ENCODE measurements at regions of chr1 and their contacts with region 1.

Region 1: DNA sequence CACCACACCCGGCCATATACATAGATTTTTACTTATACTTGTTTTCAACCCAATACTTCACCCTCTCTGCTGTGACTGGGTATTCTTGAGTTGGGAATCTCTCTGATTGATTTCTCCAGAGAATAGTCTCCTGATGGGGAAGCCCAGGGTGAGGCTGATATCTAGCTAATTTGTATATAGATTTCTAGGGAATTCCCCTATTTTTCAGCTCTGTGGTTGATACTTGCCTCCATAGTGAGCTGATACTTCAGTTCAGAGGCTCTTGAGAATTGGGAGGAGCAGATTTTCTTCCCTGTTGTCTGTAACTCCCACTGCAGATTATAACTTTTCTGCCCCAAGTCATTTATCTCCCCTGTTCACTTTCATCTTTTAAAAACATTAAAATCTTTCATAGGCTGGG is 14.5 kb upstream of the SH3BGRL3 start:
- DNase-seq: no peak
- ATAC-seq: no peak
- H3K4me3 ChIP-seq: no peak overlapping the region
- H3K27ac ChIP-seq: no peak overlapping the region
- H3K4me1 ChIP-seq: no peaks in the 10 kb centered on the region
- CTCF ChIP-seq: no peak
- EP300 ChIP-seq: no peak
- POLR2A ChIP-seq: no peak
- RAD21 ChIP-seq: no peak

Region 2: DNA sequence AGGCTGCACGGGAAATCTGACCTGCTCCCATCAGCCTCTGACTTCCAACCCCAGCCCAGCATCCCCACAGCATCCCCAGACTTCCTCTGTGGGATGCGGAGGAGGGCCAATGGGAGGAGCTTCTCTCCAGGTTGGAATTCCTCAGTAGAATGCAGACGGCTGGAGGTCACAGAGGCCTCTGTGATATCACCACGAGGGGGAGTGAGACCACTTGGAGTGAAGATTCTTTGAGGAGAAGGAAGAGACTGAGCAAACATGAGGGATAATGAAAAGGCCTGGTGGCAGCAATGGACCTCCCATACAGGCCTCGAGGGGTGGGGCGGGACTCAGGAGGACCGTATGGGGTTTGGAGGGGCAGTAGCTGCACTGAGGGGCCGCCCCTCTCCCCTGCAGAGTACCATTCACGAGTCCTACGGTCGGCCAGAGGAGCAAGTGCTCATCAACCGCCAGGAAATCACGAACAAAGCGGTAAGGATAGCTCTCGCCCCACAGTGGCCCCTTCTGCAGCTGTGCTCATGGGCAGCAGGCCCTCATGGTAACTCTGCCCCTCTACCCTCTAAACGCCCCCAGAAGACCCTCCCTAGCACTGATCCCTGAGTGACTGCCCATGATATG is 74.9 kb before region 1 on chr1 and contains the start of gene CATSPER4:
- CTCF ChIA-PET with region 1: no interaction called
- POLR2A ChIA-PET with region 1: no interaction called
- DNase-seq: peak; percentile 44 to 57
- ATAC-seq: peak; percentile 62 to 81; a peak in 5 of 6 replicates
- H3K4me3 ChIP-seq: no peak within 1 kb of the TSS
- H3K27ac ChIP-seq: no peak within 1 kb of the TSS
- H3K4me1 ChIP-seq: no peaks in the 10 kb centered on the region
- CTCF ChIP-seq: no peak
- EP300 ChIP-seq: no peak
- POLR2A ChIP-seq: no peak
- RAD21 ChIP-seq: peak in 1 of 2 experiments; percentile 31; a peak in 1 of 5 replicates
- polyA plus RNA-seq, gene CATSPER4: not detected in 2 replicates

Region 3: GRCh38 chr1:26279456-26280332 is 14.3 kb after region 1 on chr1 and contains the start of gene SH3BGRL3:
- CTCF ChIA-PET with region 1: interaction called, 10 read pairs
- POLR2A ChIA-PET with region 1: no interaction called
- DNase-seq: peak; percentile 73 to 75
- ATAC-seq: peak; percentile 82 to 90
- H3K4me3 ChIP-seq: peak within 1 kb of the TSS; percentile 98
- H3K27ac ChIP-seq: peak within 1 kb of the TSS; percentile 99
- H3K4me1 ChIP-seq: peaks cover 50% of the 10 kb centered on the region
- CTCF ChIP-seq: peak; percentile 41
- EP300 ChIP-seq: no peak
- POLR2A ChIP-seq: peak; percentile 77
- RAD21 ChIP-seq: no peak
- polyA plus RNA-seq, gene SH3BGRL3: 36.1 and 38.7 TPM in 2 replicates

Region 4: DNA sequence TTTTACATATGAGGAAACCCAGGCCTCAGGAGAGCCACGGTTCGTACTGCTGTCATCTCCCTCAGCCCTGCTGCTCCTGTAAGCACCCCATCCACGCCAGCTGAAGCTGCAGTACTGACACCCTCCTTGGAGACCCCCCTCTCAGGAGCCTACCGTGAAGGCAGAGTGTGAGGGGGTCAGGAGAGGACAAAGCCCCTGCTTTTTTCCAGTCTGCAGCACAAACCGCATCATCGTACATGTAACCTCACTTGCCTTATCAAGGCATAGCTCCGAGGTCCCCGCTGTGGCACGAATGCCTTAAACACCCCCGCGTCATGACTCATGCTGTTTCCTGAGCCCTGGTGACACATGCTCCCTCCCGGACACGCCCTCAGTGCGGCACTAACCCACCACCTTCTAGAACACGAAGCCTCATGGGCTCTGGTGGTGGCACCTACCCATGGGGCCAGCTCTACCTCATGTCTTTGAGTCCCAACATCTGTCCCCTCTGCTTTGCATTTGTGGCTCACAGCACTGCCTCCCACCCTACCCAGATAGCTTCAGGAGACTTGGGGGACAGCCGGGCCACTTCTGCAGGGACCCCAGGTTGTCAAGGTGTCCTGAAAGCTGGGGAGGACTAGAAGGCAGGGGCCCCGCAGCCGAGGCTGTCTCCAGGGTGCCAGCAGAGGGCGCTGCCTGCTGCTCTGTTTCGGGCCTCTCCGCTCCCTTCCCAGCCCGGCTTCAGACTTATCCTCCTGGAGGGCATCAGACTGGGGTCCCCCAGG is 19.4 kb after region 1 on chr1:
- CTCF ChIA-PET with region 1: interaction called, 10 read pairs
- POLR2A ChIA-PET with region 1: no interaction called
- DNase-seq: peak; percentile 64
- ATAC-seq: peak; percentile 67 to 82
- H3K4me3 ChIP-seq: no peak overlapping the region
- H3K27ac ChIP-seq: peak overlapping the region in 1 of 2 experiments; percentile 64; a peak in 3 of 6 replicates
- H3K4me1 ChIP-seq: peaks cover 23% of the 10 kb centered on the region
- CTCF ChIP-seq: peak; percentile 63
- EP300 ChIP-seq: no peak
- POLR2A ChIP-seq: no peak
- RAD21 ChIP-seq: peak; percentile 69